OCI-LY7 (cell line): ENCODE measurements at regions of chrX and their contacts with region 1.

Region 1: DNA sequence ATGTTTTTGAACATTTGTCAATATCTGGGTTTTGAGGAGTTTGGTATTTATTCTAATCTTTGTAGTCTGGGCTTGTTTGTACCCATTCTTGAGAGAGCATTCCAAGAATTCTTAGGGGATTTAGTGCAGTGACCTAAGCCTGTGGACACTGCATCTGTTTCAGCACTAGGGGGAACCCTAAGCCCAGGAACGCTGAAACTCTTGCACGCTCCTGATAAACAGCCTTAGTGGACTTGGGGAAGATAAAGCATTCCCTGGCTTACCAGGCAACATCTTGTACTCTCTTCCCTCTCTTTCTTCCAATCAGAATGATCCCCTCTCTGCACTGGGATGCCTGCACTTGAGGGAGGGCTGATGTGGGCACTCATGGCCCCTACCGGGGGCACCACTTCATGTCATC is 654.9 kb upstream of the HTR2C start:
- DNase-seq: peak; percentile 7
- H3K4me3 ChIP-seq: no peak overlapping the region
- H3K27ac ChIP-seq: no peak overlapping the region
- H3K4me1 ChIP-seq: no peaks in the 10 kb centered on the region
- CTCF ChIP-seq: peak; percentile 65

Region 2: DNA sequence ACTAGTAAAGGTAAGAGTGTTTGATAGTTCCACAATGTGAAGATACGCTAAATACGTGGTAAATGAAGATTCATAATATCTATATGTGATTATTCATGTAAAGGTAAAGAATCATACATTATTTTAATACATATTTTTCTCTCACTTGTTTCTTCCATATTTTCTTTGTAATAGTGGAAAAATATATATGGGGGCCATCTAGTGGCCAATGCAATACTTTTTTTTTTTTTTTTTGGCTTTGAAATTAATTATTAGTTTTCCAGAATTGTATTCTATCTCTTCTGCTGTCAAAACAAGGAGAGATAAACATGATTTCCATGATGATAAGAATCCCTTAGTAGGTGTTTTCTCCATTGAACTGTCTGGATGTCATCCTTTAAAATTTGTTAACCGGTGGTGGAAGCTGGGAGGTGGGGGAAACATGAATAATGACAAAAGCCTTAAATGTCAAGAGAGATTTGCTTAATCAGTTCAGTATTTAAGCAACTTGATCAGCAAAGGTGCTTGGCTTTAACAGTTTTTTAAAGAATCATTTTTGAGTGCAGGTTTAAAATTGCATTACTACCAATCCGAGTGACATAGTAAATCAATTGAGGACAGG is 146.2 kb after region 1 on chrX:
- CTCF ChIA-PET with region 1: no interaction called
- POLR2A ChIA-PET with region 1: no interaction called
- intact Hi-C with region 1: loop called (anchors 2 kb)
- DNase-seq: no peak
- H3K4me3 ChIP-seq: no peak overlapping the region
- H3K27ac ChIP-seq: no peak overlapping the region
- H3K4me1 ChIP-seq: no peaks in the 10 kb centered on the region
- CTCF ChIP-seq: peak; percentile 73